GM12878 (cell line): ENCODE measurements at regions of chr1 and their contacts with region 1.

Region 1: GRCh38 chr1:53878492-53879105 is 11.0 kb downstream of the YIPF1 start:
- DNase-seq: no peak
- ATAC-seq: peak; percentile 60; the same call in 2 of the 3 replicates
- H3K4me3 ChIP-seq: no peak overlapping the region
- H3K27ac ChIP-seq: no peak overlapping the region
- H3K4me1 ChIP-seq: no peaks in the 10 kb centered on the region
- H3K27me3 ChIP-seq: no peaks in the 10 kb centered on the region
- CTCF ChIP-seq: peak; percentile 48 to 55 (median 54)
- EP300 ChIP-seq: no peak
- POLR2A ChIP-seq: no peak
- RAD21 ChIP-seq: peak; percentile 67

Region 2: GRCh38 chr1:53620061-53620855 is 258.3 kb before region 1 on chr1:
- CTCF ChIA-PET with region 1: no interaction called
- POLR2A ChIA-PET with region 1: no interaction called
- RAD21 ChIA-PET with region 1: no interaction called
- SMC1A ChIA-PET with region 1: no interaction called
- in situ Hi-C with region 1: no loop called
- intact Hi-C with region 1: no loop called
- DNase-seq: no peak
- ATAC-seq: no peak
- H3K4me3 ChIP-seq: no peak overlapping the region
- H3K27ac ChIP-seq: no peak overlapping the region
- H3K4me1 ChIP-seq: no peaks in the 10 kb centered on the region
- H3K27me3 ChIP-seq: no peaks in the 10 kb centered on the region; a peak in 1 of 4 replicates
- CTCF ChIP-seq: no peak
- EP300 ChIP-seq: no peak
- POLR2A ChIP-seq: no peak
- RAD21 ChIP-seq: no peak

Region 3: GRCh38 chr1:53889304-53890298 is 11.0 kb after region 1 on chr1 and contains the start of gene YIPF1:
- CTCF ChIA-PET with region 1: interaction called, 33 read pairs
- POLR2A ChIA-PET with region 1: no interaction called
- RAD21 ChIA-PET with region 1: no interaction called
- SMC1A ChIA-PET with region 1: interaction called, 4 read pairs
- in situ Hi-C with region 1: no loop called
- intact Hi-C with region 1: no loop called
- DNase-seq: peak; percentile 48
- ATAC-seq: peak; percentile 98
- H3K4me3 ChIP-seq: peak within 1 kb of the TSS; percentile 80
- H3K27ac ChIP-seq: peak within 1 kb of the TSS; percentile 85
- H3K4me1 ChIP-seq: peaks cover 5% of the 10 kb centered on the region; the same call in 1 of the 2 replicates
- H3K27me3 ChIP-seq: no peaks in the 10 kb centered on the region
- CTCF ChIP-seq: peak in 1 of 3 experiments; percentile 7; a peak in 1 of 6 replicates
- EP300 ChIP-seq: no peak
- POLR2A ChIP-seq: peak; percentile 87
- RAD21 ChIP-seq: no peak
- polyA plus RNA-seq, gene YIPF1: 13.0 to 15.7 TPM